Colonic mucosa (tissue), 4 donors: ENCODE measurements at regions of chr20 and their contacts with region 1.

Region 1: GRCh38 chr20:34709831-34710567 is 5.9 kb downstream of the TP53INP2 start:
- DNase-seq: peak; percentile 77
- H3K4me3 ChIP-seq: peak overlapping the region; percentile 51
- H3K27ac ChIP-seq: peak overlapping the region; percentile 61
- H3K4me1 ChIP-seq: peaks cover 6% of the 10 kb centered on the region
- H3K27me3 ChIP-seq: no peaks in the 10 kb centered on the region
- CTCF ChIP-seq: no peak

Region 2: DNA sequence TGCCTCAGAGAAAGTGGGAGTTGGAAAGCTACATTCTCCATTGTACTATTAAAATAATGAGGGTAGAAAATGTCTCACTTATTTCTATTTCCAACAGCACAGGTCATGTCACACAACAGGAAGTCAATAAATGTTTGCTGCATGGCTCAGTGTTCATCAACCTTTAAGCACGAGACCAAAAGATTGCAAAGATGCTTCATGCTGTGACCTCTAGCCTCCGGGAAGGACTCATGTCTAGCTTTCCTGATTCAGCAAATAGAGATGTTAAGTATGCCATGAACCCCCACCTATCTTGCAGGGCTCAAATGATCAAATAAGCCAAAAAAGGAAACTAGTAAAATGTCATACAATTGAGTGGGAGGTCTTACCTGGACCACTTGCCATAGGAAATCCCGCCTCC is 58.1 kb after region 1 on chr20:
- intact Hi-C with region 1: loop called (anchors 10 kb)
- DNase-seq: no peak
- H3K4me3 ChIP-seq: no peak overlapping the region
- H3K27ac ChIP-seq: no peak overlapping the region
- H3K4me1 ChIP-seq: no peaks in the 10 kb centered on the region
- H3K27me3 ChIP-seq: no peaks in the 10 kb centered on the region
- CTCF ChIP-seq: no peak